Activated CD8-positive, alpha-beta T cell treated with anti-CD3 and anti-CD28 coated beads for 36 hours (primary cell): ENCODE measurements at regions of chr1 and their contacts with region 1.

Region 1: DNA sequence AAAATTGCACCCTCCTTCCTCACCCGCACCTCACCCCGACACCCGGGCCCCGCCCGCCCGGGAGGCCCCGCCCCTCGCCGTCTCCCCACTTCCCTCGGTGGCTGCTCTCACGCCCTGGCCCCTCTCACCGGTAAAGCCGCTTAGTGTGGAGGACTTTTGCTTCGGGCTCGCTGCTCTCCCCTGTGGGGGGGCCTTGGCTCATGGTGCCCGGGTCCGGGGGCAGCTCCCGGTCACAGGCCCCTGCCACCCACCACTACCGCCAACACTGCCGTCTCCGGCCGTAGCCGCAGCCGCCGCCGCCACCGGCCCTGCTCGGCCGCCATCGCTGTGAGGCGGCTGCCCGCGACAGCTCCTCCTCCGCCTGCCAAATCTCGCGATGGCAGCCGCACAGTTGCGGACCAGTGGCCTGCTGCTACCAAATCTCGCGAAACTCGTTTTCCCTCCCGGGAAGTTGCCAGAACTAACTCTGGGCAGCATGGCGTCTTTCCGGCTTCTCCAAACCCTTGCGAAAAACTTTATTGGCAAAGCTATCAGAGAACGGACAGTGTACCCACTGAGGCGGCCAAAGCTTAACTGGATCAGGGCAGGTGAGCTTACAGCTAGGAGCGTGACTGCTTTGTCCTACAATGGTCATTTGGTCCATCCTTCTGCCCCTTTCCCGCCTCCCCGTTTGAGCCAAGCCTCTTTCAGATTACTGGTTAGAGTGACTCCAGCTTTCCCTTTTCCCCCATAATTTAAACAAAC is at the start of gene SMG5:
- DNase-seq: peak; percentile 97
- ATAC-seq: peak; percentile 91
- H3K4me3 Mint-ChIP-seq: peak within 1 kb of the TSS; percentile 99
- H3K27ac Mint-ChIP-seq: peak within 1 kb of the TSS; percentile 94
- H3K4me1 Mint-ChIP-seq: peaks cover 32% of the 10 kb centered on the region
- H3K27me3 Mint-ChIP-seq: no peaks in the 10 kb centered on the region
- CTCF ChIP-seq: no peak
- total RNA-seq, gene SMG5: 70.3 to 70.7 TPM

Region 2: DNA sequence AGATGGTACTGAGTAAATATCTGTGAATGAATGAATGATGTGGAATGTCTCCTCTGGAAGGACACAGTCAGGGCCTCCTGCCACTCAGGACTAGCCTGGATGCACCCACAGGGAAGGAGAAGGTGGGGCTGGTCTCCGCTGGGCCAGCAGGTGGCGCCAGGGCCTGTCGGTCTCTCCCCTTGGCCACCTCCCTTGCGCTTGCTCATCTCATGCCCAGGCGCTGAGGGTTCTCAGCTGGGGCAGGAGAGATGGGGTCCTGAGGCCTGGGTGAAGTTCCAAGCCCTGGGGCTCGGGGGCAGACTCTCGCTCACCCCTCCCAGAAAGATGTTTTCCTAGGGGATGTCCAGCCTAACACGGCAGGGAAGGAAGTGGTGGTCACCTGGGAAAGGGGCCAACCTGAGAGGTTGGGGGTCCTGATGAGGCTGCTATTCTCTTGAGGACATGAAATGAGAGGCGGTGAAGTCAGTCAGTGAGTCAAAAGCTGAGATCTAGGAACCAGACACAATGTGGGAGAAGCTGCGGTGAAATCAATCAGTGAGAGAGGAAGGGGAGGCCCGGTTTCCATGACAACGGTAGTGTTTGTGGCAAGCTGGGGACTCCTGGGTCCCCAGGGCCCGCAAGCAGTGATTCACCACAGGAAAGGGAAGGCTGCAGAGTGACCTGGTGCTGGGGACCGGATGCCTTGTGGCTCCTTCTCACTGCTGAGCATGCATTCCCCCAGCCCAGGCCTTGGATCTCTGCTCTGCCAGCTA is 185.8 kb before region 1 on chr1:
- CTCF ChIA-PET with region 1: interaction called, 4 read pairs
- POLR2A ChIA-PET with region 1: interaction called, 11 read pairs
- intact Hi-C with region 1: no loop called
- DNase-seq: peak; percentile 97
- ATAC-seq: peak; percentile 81
- H3K4me3 Mint-ChIP-seq: peak overlapping the region; percentile 52
- H3K27ac Mint-ChIP-seq: peak overlapping the region; percentile 93
- H3K4me1 Mint-ChIP-seq: peaks cover 45% of the 10 kb centered on the region
- H3K27me3 Mint-ChIP-seq: peaks cover 20% of the 10 kb centered on the region
- CTCF ChIP-seq: peak; percentile 99

Region 3: DNA sequence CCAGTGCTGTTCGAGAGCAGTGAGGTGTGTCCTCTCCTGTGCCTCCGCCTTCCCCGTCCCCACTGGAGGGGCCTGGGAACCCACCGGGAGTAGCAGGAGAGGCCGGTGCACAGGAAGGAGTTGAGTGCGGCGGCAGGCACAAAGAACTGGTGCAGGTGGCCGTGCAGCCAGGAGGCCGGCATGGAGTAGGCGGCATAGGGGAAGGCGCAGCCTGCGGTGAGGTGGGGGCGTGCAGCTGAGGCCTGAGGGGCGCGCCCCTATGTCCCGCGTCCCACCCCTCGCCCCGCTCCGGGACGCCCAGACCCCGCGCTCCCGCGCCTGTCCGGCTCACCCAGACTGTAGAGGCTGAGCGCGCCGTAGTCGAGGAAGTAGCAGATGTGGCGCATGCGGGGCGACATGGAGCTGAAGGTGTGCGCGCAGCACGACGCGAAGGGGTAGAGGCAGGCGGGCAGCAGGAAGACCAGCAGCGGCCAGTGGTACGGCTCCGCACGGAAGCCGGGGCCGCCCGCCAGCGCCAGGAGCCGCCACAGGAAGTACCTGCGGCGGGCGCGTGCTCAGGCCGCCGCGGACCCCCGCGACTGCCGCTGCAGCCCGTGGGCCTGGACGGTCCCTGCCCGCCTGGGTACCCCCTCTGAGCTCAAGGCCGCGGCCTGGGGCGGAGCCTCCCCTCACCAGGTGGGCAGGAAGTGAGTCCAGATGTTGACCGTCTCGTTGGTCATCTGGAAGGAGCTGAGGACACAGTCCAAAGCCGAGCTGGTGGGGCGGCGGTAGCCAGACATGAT is 37.0 kb before region 1 on chr1:
- CTCF ChIA-PET with region 1: interaction called, 4 read pairs
- POLR2A ChIA-PET with region 1: interaction called, 11 read pairs
- intact Hi-C with region 1: no loop called
- DNase-seq: peak; percentile 64
- ATAC-seq: peak; percentile 60
- H3K4me3 Mint-ChIP-seq: peak overlapping the region; percentile 70
- H3K27ac Mint-ChIP-seq: peak overlapping the region; percentile 73
- H3K4me1 Mint-ChIP-seq: peaks cover 17% of the 10 kb centered on the region
- H3K27me3 Mint-ChIP-seq: no peaks in the 10 kb centered on the region
- CTCF ChIP-seq: no peak

Region 4: GRCh38 chr1:156268336-156268735 is 14.3 kb before region 1 on chr1:
- CTCF ChIA-PET with region 1: interaction called, 8 read pairs
- POLR2A ChIA-PET with region 1: interaction called, 50 read pairs
- intact Hi-C with region 1: no loop called
- DNase-seq: no peak
- ATAC-seq: no peak
- H3K4me3 Mint-ChIP-seq: no peak overlapping the region
- H3K27ac Mint-ChIP-seq: no peak overlapping the region
- H3K4me1 Mint-ChIP-seq: peaks cover 3% of the 10 kb centered on the region
- H3K27me3 Mint-ChIP-seq: no peaks in the 10 kb centered on the region
- CTCF ChIP-seq: no peak

Region 5: GRCh38 chr1:156303241-156303640 is 20.6 kb after region 1 on chr1:
- CTCF ChIA-PET with region 1: interaction called, 3 read pairs
- POLR2A ChIA-PET with region 1: interaction called, 23 read pairs
- intact Hi-C with region 1: no loop called
- DNase-seq: no peak
- ATAC-seq: no peak
- H3K4me3 Mint-ChIP-seq: no peak overlapping the region
- H3K27ac Mint-ChIP-seq: no peak overlapping the region
- H3K4me1 Mint-ChIP-seq: peaks cover 2% of the 10 kb centered on the region
- H3K27me3 Mint-ChIP-seq: no peaks in the 10 kb centered on the region
- CTCF ChIP-seq: no peak

Region 6: GRCh38 chr1:156319664-156320063 is 37.0 kb after region 1 on chr1:
- CTCF ChIA-PET with region 1: interaction called, 37 read pairs
- POLR2A ChIA-PET with region 1: interaction called, 7 read pairs
- intact Hi-C with region 1: no loop called
- DNase-seq: peak; percentile 39
- ATAC-seq: no peak
- H3K4me3 Mint-ChIP-seq: no peak overlapping the region
- H3K27ac Mint-ChIP-seq: no peak overlapping the region
- H3K4me1 Mint-ChIP-seq: no peaks in the 10 kb centered on the region
- H3K27me3 Mint-ChIP-seq: no peaks in the 10 kb centered on the region
- CTCF ChIP-seq: peak; percentile 47

Region 7: GRCh38 chr1:156338180-156338973 is 55.7 kb after region 1 on chr1 and contains the starts of genes CCT3 and TSACC:
- CTCF ChIA-PET with region 1: interaction called, 24 read pairs
- POLR2A ChIA-PET with region 1: interaction called, 26 read pairs
- intact Hi-C with region 1: loop called (anchors 2 kb)
- DNase-seq: peak; percentile 99
- ATAC-seq: peak; percentile 95
- H3K4me3 Mint-ChIP-seq: peak within 1 kb of the TSS; percentile 98
- H3K27ac Mint-ChIP-seq: peak within 1 kb of the TSS; percentile 99
- H3K4me1 Mint-ChIP-seq: peaks cover 27% of the 10 kb centered on the region
- H3K27me3 Mint-ChIP-seq: no peaks in the 10 kb centered on the region
- CTCF ChIP-seq: no peak
- total RNA-seq, gene CCT3: 379 to 388 TPM
- total RNA-seq, gene TSACC: 0.72 TPM in 1 of 2 experiments, not detected in the other

Region 8: DNA sequence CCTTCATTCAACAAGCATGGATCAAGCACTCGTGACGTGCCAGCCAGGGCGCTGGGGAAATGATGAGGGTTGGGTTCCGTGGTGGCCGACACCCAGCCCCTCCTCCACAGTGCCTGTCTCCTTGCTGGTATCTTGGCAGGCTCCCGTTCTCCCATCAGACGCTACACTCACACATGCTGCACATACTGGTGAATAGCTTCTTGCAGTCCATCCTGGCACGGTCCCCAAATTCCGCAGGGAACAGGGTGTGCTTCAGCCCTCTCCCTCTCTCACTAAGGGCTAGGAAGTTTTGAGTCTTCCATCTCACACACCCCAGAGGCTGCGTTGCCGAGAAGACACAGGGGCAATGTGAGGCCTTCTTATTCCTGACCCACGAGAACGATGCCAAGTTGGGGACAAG is 228.1 kb after region 1 on chr1:
- CTCF ChIA-PET with region 1: no interaction called
- POLR2A ChIA-PET with region 1: no interaction called
- intact Hi-C with region 1: no loop called
- DNase-seq: no peak
- ATAC-seq: no peak
- H3K4me3 Mint-ChIP-seq: no peak overlapping the region
- H3K27ac Mint-ChIP-seq: no peak overlapping the region
- H3K4me1 Mint-ChIP-seq: peaks cover 34% of the 10 kb centered on the region
- H3K27me3 Mint-ChIP-seq: no peaks in the 10 kb centered on the region
- CTCF ChIP-seq: no peak